ENCODE measurements at regions of chr20 and their contacts with region 1.

Region 1: DNA sequence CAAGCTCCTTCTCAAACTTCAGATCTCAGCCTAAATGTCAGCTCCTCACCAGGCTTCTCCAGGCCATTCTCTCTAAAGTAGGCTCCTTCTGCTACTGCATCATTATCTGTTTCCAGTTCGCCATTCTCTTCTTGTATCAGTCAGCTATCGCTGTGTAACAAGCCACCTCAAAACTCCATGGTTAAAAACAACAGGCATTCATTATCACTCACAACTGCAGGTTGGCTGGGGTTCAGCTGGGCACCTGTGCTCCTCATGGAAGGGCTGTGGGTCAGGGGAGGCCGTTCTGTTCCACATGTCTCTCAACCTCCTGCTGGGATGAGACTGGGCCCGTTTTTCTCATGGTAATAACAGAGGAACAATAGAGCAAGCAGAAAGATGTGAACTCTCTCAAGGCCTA is 28.7 kb downstream of the PRND start:
- DNase-seq: no peak
- H3K4me3 ChIP-seq: no peak overlapping the region
- H3K27ac ChIP-seq: no peak overlapping the region
- H3K4me1 ChIP-seq: no peaks in the 10 kb centered on the region
- H3K27me3 ChIP-seq: no peaks in the 10 kb centered on the region
- CTCF ChIP-seq: no peak
- POLR2A ChIP-seq: no peak

Region 2: GRCh38 chr20:4949833-4950178 is 199.4 kb after region 1 on chr20:
- intact Hi-C with region 1: loop called in 1 of 2 experiments (anchors 10 kb)
- DNase-seq: peak; percentile 48 to 81 (median 65)
- H3K4me3 ChIP-seq: peak overlapping the region in 1 of 4 donors; percentile 6
- H3K27ac ChIP-seq: peak overlapping the region; percentile 51 to 90 (median 86)
- H3K4me1 ChIP-seq: peaks cover 24 to 60% of the 10 kb centered on the region in 2 donors
- H3K27me3 ChIP-seq: no peaks in the 10 kb centered on the region
- CTCF ChIP-seq: peak; percentile 19 to 85 (median 80)
- POLR2A ChIP-seq: peak in 1 of 2 donors; percentile 63

Region 3: GRCh38 chr20:5095931-5096330 is 345.6 kb after region 1 on chr20:
- intact Hi-C with region 1: loop called in 1 of 2 experiments (anchors 5 kb)
- DNase-seq: peak in 1 of 7 donors; percentile 36
- H3K4me3 ChIP-seq: no peak overlapping the region
- H3K27ac ChIP-seq: no peak overlapping the region
- H3K4me1 ChIP-seq: peaks cover 0 to 5% of the 10 kb centered on the region in 2 donors
- H3K27me3 ChIP-seq: no peaks in the 10 kb centered on the region
- CTCF ChIP-seq: no peak
- POLR2A ChIP-seq: no peak

Measured in adrenal gland (tissue), 19 donors.